IMR-90 (cell line): ENCODE measurements at regions of chr12 and their contacts with region 1.

Region 1: GRCh38 chr12:122974274-122974891 is 661 bp upstream of the OGFOD2 start:
- DNase-seq: peak; percentile 98
- ATAC-seq: peak; percentile 87
- H3K4me3 ChIP-seq: peak overlapping the region; percentile 92
- H3K27ac ChIP-seq: peak overlapping the region; percentile 89
- H3K4me1 ChIP-seq: peaks cover 8% of the 10 kb centered on the region; the same call in 1 of the 2 replicates
- H3K27me3 ChIP-seq: no peaks in the 10 kb centered on the region
- CTCF ChIP-seq: no peak
- POLR2A ChIP-seq: no peak
- RAD21 ChIP-seq: no peak

Region 2: GRCh38 chr12:122646517-122647217 is 327.7 kb before region 1 on chr12:
- CTCF ChIA-PET with region 1: no interaction called
- POLR2A ChIA-PET with region 1: no interaction called
- dilution Hi-C with region 1: no loop called
- in situ Hi-C with region 1: loop called (anchors 25 kb)
- intact Hi-C with region 1: no loop called
- DNase-seq: peak; percentile 88
- ATAC-seq: peak; percentile 46
- H3K4me3 ChIP-seq: no peak overlapping the region
- H3K27ac ChIP-seq: no peak overlapping the region
- H3K4me1 ChIP-seq: no peaks in the 10 kb centered on the region
- H3K27me3 ChIP-seq: no peaks in the 10 kb centered on the region
- CTCF ChIP-seq: no peak
- POLR2A ChIP-seq: no peak
- RAD21 ChIP-seq: no peak

Region 3: DNA sequence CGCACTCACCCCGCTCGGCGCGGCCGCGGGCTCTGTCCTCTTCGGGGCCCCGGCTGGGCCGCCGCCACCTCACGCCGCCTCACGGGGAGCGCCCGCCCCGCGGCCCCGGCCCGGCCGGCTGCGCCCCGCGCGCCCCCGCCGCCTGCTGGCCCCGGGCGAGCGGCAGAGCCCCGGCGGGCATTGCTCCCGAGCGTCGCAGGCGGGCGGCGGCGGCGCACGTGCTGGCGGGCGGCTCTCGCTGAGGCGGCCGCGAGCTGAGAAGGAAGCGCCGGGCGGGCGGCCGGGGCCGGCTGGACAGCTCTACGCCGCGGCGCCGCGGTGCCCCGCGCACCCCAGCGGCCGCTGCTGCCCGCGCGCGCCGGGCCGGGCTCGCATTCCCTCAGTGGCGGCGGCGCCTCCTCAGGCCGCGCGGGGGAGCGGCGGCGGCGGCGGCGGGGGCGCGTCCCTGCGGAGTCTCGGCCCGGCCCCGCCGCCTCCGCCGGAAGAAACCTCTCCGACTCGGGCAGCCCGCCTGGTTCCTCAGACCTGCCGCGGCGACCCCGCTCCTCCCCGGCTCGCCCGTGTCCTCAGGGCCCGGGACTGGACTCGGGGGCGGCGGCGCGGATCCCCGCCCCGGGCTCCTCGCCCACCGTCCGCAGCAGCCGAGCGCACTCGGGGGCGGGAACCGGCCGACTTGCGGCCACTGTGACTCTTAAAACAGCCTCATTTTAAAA is 176.5 kb after region 1 on chr12 and contains the start of gene PITPNM2:
- CTCF ChIA-PET with region 1: no interaction called
- POLR2A ChIA-PET with region 1: no interaction called
- dilution Hi-C with region 1: no loop called
- in situ Hi-C with region 1: no loop called
- intact Hi-C with region 1: loop called (anchors 2 kb)
- DNase-seq: peak; percentile 58
- ATAC-seq: peak; percentile 94
- H3K4me3 ChIP-seq: peak within 1 kb of the TSS; percentile 53
- H3K27ac ChIP-seq: peak within 1 kb of the TSS; percentile 68
- H3K4me1 ChIP-seq: peaks cover 15% of the 10 kb centered on the region
- H3K27me3 ChIP-seq: no peaks in the 10 kb centered on the region
- CTCF ChIP-seq: peak; percentile 41
- POLR2A ChIP-seq: no peak
- RAD21 ChIP-seq: peak; percentile 49
- total RNA-seq, gene PITPNM2: 0.83 and 1.6 TPM in 2 replicates

Region 4: GRCh38 chr12:123171967-123172366 is 197.6 kb after region 1 on chr12:
- CTCF ChIA-PET with region 1: no interaction called
- POLR2A ChIA-PET with region 1: no interaction called
- dilution Hi-C with region 1: no loop called
- in situ Hi-C with region 1: no loop called
- intact Hi-C with region 1: no loop called
- DNase-seq: no peak
- ATAC-seq: no peak
- H3K4me3 ChIP-seq: no peak overlapping the region
- H3K27ac ChIP-seq: no peak overlapping the region
- H3K4me1 ChIP-seq: no peaks in the 10 kb centered on the region
- H3K27me3 ChIP-seq: no peaks in the 10 kb centered on the region
- CTCF ChIP-seq: no peak
- POLR2A ChIP-seq: no peak
- RAD21 ChIP-seq: no peak

Region 5: DNA sequence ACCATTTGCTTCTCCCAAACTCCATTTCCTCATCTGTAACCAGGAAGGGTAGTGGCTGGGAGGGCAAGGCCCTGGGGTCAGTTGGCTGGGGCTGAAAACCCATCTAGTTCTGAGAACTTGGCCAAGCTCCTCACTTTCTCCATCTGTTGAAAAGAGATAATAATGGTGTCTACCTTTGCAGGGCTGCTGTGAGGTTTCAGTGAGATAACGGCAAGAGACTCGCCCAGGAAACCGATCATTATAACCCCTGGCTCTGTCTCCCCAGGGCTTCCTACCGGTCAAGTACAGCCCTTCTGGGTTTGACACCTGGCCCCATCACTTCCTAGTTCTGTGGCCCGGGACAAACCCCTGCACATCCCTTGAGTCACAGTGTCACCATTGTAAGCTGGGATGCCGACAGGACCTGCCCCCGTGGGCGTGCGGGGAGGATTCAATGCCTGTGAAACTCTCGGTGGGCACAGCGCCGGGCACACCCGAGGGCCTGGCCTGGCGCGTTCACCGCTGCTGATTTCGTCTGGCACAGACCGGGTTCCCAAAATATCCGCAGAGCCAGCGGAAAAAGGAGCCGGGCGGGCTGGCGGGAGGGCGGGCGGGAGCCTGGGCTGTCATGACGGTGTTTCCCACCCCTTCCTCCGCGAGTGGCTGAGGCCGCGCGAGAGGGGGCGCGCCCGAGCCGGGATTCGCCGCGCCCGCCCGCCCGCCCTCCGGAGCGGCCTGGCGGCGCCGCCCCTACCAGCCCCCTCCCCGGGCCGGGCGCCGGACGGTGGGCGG is 414.0 kb after region 1 on chr12:
- CTCF ChIA-PET with region 1: no interaction called
- POLR2A ChIA-PET with region 1: no interaction called
- dilution Hi-C with region 1: no loop called
- in situ Hi-C with region 1: no loop called
- intact Hi-C with region 1: loop called (anchors 10 kb)
- DNase-seq: peak; percentile 52
- ATAC-seq: peak; percentile 62
- H3K4me3 ChIP-seq: peak overlapping the region; percentile 99
- H3K27ac ChIP-seq: peak overlapping the region; percentile 85
- H3K4me1 ChIP-seq: peaks cover 13% of the 10 kb centered on the region
- H3K27me3 ChIP-seq: no peaks in the 10 kb centered on the region
- CTCF ChIP-seq: no peak
- POLR2A ChIP-seq: no peak
- RAD21 ChIP-seq: no peak